A673 (cell line): ENCODE measurements at regions of chr15 and their contacts with region 1.

Region 1: DNA sequence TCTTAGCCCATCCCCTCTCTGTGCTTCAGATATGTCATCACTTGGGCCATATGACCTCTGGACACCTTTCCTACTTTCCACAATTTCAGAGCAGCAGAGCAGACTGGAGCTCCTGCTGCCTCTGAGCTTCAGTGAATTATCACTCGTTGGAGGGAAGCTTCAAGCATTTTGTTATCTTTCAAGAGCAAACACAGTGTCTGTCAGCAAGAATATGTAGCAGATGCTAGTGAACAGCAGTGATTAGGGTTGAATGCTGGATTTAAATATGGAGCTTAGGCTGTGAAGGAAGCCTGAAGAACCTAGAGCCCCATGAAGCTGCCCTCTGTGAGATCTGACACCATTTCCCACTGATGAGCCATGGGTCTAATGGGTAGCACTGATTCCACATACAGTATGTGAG is 115.4 kb downstream of the UBE3A start:
- DNase-seq: no peak
- H3K4me3 ChIP-seq: no peak overlapping the region
- H3K27ac ChIP-seq: no peak overlapping the region
- H3K4me1 ChIP-seq: no peaks in the 10 kb centered on the region
- H3K27me3 ChIP-seq: no peaks in the 10 kb centered on the region
- CTCF ChIP-seq: no peak

Region 2: GRCh38 chr15:25372298-25372697 is 48.9 kb after region 1 on chr15:
- CTCF ChIA-PET with region 1: no interaction called
- POLR2A ChIA-PET with region 1: no interaction called
- intact Hi-C with region 1: loop called (anchors 10 kb)
- DNase-seq: no peak
- H3K4me3 ChIP-seq: no peak overlapping the region
- H3K27ac ChIP-seq: no peak overlapping the region
- H3K4me1 ChIP-seq: peaks cover 6% of the 10 kb centered on the region
- H3K27me3 ChIP-seq: no peaks in the 10 kb centered on the region
- CTCF ChIP-seq: no peak